ENCODE measurements at regions of chr6 and their contacts with region 1.

Region 1: DNA sequence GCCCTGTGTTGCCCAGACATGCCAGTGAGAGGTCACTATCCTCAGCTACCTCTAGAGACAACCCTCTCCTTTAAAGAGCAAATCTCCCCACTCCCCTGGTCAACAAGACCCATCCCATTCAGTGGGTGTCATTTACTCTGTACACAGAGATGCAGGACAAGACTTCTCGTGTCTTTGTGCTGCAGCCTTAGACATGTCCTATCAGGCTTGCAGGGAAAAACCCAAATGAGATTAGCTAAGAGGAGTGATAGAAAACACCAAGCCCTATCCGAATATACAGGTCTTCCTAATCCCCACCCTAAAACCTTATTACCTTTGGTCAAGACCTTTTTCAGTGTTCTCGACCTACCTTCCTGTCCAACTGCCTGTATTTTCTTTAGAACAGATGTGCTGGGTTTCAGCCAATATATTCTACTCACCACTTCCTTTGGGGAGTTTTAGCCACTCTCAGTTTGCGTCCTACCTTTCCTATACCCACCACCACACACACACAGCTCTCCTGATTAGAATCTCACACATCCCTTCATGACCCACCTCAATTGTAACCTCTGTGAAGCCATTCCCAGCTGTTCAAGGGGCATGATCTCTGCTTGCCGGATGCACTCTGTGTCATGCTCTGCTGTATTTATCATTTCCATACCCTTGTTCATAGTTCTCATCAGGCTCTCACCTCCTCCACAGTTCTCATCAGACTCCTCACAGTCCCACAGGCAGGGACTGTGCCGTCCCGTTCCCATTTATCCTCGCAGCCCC is 39.7 kb downstream of the TRAM2 start:
- DNase-seq: no peak
- H3K4me3 ChIP-seq: no peak overlapping the region
- CTCF ChIP-seq: no peak

Region 2: DNA sequence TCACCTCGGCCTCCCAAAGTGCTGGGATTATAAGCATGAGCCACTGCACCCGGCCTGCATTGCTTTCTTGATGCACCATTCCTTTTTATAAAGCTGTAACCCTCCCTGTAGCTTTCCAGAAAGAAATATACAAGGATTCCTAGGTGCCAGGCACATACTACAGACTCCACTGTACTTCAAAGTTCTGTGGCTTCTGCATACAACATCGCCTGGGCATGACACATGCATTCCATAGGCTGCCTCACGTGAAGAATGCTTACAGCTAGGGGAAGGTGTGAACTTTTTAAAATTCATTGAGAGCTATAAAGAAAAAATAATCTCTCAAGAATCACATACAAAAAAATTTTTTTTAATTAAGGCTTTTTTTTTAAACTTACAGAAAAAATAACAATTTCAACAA is 10.5 kb before region 1 on chr6:
- CTCF ChIA-PET with region 1: interaction called, 18 read pairs
- POLR2A ChIA-PET with region 1: interaction called, 6 read pairs
- DNase-seq: no peak
- H3K4me3 ChIP-seq: no peak overlapping the region
- CTCF ChIP-seq: no peak

Region 3: DNA sequence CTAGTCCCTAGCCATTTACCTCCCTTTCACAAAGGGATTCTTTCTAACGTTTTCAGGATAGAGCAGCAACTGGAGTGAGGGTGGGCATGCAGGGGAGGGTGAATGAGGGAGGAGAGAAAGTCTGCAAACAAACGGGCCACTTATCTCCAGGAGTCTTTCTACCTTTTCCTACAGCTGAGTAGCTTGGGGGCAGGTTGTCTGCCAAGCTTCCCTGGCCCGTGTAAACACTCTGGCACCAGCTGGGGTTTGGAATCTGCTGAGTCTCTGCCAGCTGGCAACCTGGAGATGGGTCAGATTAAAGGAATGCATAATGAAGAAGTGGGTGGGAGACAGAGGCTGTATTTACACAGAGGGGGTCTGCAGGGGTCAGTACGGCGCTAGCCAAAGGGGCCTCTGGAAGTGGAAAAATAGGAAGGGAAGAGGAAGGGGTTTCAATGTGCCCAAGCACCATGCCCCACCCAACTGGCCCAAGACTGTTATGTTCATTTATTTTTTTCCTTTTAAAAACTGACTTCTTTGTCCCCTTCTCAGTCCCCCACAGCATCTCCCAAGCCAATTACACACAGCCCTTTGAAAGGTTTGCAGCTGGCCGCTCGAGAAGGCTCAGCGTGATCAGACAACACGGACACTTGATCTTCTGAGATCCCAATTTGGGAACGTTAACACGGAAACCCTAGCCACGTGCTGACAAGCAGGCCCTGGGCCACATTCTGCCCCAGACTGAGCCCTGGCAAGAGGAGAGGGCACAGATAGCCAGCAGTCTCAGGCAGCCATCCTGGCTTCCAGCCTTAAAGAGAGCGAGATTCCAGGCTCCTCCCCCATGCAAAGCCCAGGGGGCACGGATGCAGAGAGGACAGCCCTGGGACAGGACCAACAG is 14.5 kb after region 1 on chr6:
- CTCF ChIA-PET with region 1: interaction called, 7 read pairs
- POLR2A ChIA-PET with region 1: interaction called, 26 read pairs
- DNase-seq: no peak
- H3K4me3 ChIP-seq: no peak overlapping the region
- CTCF ChIP-seq: no peak

Region 4: DNA sequence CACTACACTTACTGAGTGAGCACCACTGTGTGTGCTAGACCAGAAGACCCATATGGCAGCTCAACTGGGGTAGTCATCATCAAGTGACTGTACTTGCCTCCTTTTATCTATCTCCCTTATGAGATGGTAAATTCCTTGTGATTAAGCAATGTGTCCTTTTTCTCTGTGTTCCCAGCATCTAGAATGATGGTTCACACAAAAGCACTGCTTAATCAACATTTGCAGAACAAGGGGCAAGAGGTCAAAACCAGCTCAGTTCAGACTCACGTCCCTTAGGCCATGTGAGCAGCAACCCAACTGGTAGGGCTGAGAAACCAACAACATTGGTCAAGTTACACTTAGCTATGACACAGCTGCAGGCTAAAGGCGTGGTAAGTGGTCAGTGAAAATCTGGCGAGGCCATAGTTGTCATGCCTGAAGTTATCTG is 29.7 kb after region 1 on chr6:
- CTCF ChIA-PET with region 1: interaction called, 28 read pairs
- POLR2A ChIA-PET with region 1: interaction called, 17 read pairs
- DNase-seq: peak; percentile 90
- H3K4me3 ChIP-seq: no peak overlapping the region
- CTCF ChIP-seq: no peak

Measured in AG04449 (cell line).